ENCODE measurements at regions of chr1 and their contacts with region 1.

Region 1: DNA sequence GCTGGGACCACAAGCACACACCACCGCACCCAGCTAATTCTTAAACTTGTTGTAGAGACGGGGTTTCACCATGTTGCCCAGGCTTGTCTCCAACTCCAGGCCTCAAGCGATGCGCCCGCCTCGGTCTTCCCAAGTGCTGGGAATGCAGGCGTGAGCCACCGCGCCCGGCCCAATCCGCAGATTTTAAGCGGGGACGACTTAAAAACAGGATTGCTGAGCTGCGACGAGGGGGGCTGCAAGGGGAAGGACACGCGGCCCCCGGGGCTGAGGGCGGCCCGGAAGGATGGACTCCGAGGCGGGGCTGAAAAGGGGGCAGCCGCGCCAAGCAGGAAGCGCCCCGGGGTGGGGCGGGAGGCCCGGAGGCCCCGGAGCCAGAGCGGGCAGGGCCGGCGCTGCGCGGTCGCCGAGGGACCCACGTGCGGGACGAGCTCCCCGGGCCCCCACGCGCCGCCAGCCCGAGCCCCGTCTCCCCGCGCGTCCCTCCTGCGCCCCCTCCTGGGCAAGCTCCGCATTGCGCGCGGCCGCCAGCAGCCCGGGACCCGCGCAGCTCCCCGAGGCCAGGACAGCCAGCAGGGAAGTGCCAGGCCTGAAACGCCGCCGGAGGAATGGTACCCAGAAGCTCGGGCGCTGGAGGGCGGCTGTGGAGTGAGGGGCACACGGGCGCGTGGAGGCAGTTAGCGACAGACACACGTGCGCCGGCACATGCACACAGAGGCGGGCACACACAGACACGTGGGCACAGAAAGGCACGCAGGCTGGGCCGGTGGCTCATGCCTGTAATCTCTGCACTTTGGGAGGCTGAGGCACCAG is 5.5 kb upstream of the PRKCZ start:
- DNase-seq: no peak
- H3K4me3 ChIP-seq: peak overlapping the region; percentile 32 to 54
- H3K27ac ChIP-seq: peak overlapping the region; percentile 66
- H3K4me1 ChIP-seq: peaks cover 26% of the 10 kb centered on the region
- H3K27me3 ChIP-seq: no peaks in the 10 kb centered on the region
- CTCF ChIP-seq: peak; percentile 75 to 80 (median 80)
- POLR2A ChIP-seq: no peak

Region 2: DNA sequence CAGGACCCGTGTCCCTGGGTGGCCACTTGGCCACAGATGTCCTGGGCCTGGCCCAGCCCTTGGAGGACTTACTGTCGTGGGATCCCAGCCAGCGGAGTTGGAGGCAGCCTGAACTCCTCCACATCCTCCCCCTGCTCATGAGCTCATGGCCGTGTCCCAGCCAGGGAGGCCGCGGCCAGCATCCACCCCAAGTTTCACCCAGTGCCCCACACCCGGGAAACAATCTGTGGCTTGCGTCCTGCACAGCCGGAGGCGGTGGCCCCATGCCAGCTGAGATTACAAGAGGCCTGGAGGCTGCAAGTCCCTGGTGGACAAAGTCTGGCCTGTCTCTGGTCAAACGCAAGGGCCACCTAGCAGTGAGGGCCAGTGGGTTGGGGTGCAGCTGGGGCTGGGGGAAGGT is 98.2 kb before region 1 on chr1:
- intact Hi-C with region 1: loop called (anchors 5 kb)
- DNase-seq: no peak
- H3K4me3 ChIP-seq: no peak overlapping the region
- H3K27ac ChIP-seq: no peak overlapping the region
- H3K4me1 ChIP-seq: peaks cover 17% of the 10 kb centered on the region
- H3K27me3 ChIP-seq: no peaks in the 10 kb centered on the region
- CTCF ChIP-seq: no peak
- POLR2A ChIP-seq: no peak

Region 3: DNA sequence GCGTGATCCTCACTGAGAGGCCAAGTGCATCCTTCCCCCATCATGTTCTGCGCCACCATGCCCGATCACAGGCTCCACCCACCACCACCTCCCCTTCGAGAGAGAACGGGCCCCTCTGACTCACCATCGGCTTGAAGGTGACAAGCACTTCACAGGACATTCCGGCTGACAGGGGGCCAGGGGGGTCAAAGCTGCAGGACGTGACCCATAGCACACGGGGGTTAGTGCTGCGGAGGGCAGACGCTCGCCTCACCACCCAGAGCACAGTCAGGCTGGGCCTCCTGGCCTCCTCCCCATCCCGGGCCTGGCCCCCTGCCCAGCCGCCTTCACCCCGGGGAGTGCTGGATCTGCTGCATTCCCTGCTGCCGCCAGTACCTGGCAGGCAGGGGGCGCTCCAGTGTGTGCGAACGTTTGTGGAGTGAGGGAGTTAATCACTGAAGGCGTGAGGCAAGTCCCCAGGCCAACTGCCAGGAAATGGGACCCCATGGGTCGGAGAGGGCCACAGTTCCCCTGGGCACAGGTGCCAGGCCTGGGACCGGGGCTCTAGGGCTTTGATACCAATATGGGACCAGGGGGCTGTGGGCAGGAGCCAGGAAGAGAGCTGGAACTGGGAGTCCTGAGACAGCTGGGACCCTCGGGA is 84.8 kb before region 1 on chr1:
- intact Hi-C with region 1: loop called (anchors 5 kb)
- DNase-seq: no peak
- H3K4me3 ChIP-seq: no peak overlapping the region
- H3K27ac ChIP-seq: no peak overlapping the region
- H3K4me1 ChIP-seq: peaks cover 9% of the 10 kb centered on the region
- H3K27me3 ChIP-seq: no peaks in the 10 kb centered on the region
- CTCF ChIP-seq: peak; percentile 27 to 54 (median 48)
- POLR2A ChIP-seq: no peak

Region 4: DNA sequence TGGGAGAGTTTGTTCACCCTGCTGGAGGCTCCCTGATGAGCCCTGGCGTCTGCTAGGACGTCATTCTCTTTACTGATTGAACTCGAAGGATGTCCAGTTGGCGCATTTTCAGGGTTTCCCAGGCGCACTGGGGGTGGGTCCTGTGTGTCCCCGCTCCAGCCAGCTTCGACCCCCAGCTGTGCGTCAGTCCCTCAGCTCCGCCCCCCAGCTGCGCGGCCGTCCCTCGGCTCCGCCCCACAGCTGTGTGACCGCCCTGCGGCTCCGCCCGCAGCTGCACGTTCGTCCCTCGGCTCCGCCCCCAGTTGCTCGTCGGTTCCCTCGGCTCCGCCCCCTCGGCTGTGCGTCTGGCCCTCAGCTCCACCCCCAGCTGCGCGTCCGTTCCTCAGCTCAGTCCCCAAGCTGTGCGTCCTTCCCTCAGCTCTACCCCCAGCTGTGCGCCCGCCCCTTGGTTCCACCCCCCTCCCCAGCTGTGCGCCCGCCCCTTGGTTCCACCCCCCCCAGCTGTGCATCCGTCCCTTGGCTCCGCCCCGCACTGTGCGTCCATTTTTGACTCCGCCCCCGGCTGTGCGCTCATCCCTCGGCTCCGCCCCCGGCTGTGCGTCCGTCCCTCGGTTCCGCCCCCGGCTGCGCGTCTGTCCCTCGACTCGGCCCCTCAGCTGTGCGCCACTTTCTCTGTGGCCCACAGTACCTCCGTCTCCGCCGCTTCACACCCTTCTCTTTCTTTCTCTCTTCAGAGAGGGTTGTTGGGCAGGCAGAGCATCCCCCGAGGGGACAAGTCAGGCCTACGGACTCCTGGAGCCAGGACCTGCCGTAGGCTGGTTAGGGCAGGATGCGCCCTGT is 88.5 kb after region 1 on chr1:
- intact Hi-C with region 1: no loop called
- DNase-seq: peak in 1 of 2 donors; percentile 98
- H3K4me3 ChIP-seq: peak overlapping the region; percentile 39 to 51
- H3K27ac ChIP-seq: peak overlapping the region; percentile 87
- H3K4me1 ChIP-seq: peaks cover 33% of the 10 kb centered on the region
- H3K27me3 ChIP-seq: no peaks in the 10 kb centered on the region
- CTCF ChIP-seq: no peak
- POLR2A ChIP-seq: peak in 1 of 2 donors; percentile 61

Measured in vagina (tissue), 2 donors.